ENCODE measurements at regions of chr7 and their contacts with region 1.

Region 1: GRCh38 chr7:101856473-101857357 is 39.3 kb downstream of the CUX1 start:
- DNase-seq: peak; percentile 97
- ATAC-seq: peak; percentile 91

Region 2: GRCh38 chr7:101880282-101881054 is 23.8 kb after region 1 on chr7:
- intact Hi-C with region 1: loop called (anchors 2 kb)
- DNase-seq: no peak
- ATAC-seq: no peak

Region 3: GRCh38 chr7:101936611-101937231 is 80.0 kb after region 1 on chr7:
- intact Hi-C with region 1: loop called (anchors 5 kb)
- DNase-seq: no peak
- ATAC-seq: peak; percentile 27

Region 4: GRCh38 chr7:101953248-101953819 is 96.6 kb after region 1 on chr7:
- intact Hi-C with region 1: loop called (anchors 5 kb)
- DNase-seq: no peak
- ATAC-seq: peak; percentile 41

Measured in Right ventricle myocardium inferior (tissue), 1 donor.